Activated naive CD8-positive, alpha-beta T cell treated with anti-CD3 and anti-CD28 coated beads, Interleukin-2, amount 10 ng/mL, durations not matched to agents 7 days and 5 days (primary cell): ENCODE measurements at regions of chr17 and their contacts with region 1.

Region 1: DNA sequence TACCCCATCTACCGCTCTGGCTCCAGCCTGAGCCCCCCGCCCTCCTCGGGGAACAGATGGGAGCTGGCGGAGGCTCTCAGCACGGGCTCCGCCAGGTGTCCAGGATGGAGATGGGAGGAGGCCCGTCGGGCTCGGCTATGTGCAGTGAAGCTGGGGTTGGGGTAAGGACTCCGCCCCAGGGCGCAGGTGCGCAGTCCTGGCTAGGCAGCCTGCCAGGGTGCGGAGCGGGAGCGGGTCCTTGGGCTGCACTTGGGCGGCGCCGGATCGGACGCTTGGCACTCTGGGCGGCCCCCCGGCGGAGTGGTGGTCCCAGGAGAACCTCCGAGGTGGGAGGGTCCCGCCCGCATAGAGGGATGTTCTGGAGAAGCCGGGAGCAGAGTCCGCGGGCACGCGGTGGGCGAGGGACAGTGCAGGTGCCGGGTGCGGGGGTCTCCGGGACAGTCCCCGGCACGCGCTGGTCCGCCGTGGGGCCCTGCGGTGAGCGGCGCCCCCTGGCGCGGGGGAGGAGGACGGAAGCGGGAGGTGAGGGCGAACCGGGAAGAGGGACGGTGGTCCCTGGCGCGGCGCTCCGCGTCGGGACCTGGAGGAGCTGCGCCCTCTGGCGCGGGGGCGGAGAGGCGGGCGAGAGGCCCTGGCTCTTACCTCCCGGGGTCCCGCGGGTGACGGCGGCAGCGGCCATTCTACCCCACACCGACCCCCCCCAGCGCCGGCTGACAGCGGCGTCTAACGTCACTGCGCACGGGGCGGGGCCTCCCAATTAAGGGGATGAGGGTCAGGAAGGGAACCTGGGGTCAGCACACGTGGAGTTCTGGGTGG is at the start of gene CAMTA2:
- DNase-seq: peak; percentile 91
- ATAC-seq: peak; percentile 87
- H3K4me3 Mint-ChIP-seq: peak within 1 kb of the TSS; percentile 85
- H3K27ac Mint-ChIP-seq: peak within 1 kb of the TSS; percentile 78
- H3K4me1 Mint-ChIP-seq: peaks cover 26% of the 10 kb centered on the region
- H3K27me3 Mint-ChIP-seq: no peaks in the 10 kb centered on the region
- total RNA-seq, gene CAMTA2: 62.0 to 67.7 TPM

Region 2: GRCh38 chr17:4948931-4949320 is 38.2 kb before region 1 on chr17:
- POLR2A ChIA-PET with region 1: interaction called, 11 read pairs
- DNase-seq: no peak
- ATAC-seq: peak; percentile 44
- H3K4me3 Mint-ChIP-seq: peak overlapping the region; percentile 100
- H3K27ac Mint-ChIP-seq: peak overlapping the region; percentile 100
- H3K4me1 Mint-ChIP-seq: peaks cover 31% of the 10 kb centered on the region
- H3K27me3 Mint-ChIP-seq: no peaks in the 10 kb centered on the region

Region 3: GRCh38 chr17:4997302-4998026 is 10.3 kb after region 1 on chr17 and contains the starts of genes INCA1 and KIF1C:
- POLR2A ChIA-PET with region 1: interaction called, 27 read pairs
- DNase-seq: peak; percentile 97
- ATAC-seq: peak; percentile 84
- H3K4me3 Mint-ChIP-seq: peak within 1 kb of the TSS; percentile 89
- H3K27ac Mint-ChIP-seq: peak within 1 kb of the TSS; percentile 86
- H3K4me1 Mint-ChIP-seq: peaks cover 14% of the 10 kb centered on the region
- H3K27me3 Mint-ChIP-seq: no peaks in the 10 kb centered on the region
- total RNA-seq, gene INCA1: 0.42 to 0.54 TPM
- total RNA-seq, gene KIF1C: 35.5 to 37.3 TPM